Left colon (tissue), 2 donors: ENCODE measurements at regions of chr20 and their contacts with region 1.

Region 1: GRCh38 chr20:543369-544152 is at the start of gene CSNK2A1:
- DNase-seq: peak; percentile 93 to 95
- ATAC-seq: peak; percentile 97
- total RNA-seq, gene CSNK2A1: 106 to 117 TPM

Region 2: GRCh38 chr20:610130-611046 is 66.8 kb after region 1 on chr20 and contains the start of gene TCF15:
- intact Hi-C with region 1: no loop called
- DNase-seq: no peak
- ATAC-seq: no peak
- total RNA-seq, gene TCF15: 0.22 TPM in 1 of 2 donors, not detected in the other

Region 3: DNA sequence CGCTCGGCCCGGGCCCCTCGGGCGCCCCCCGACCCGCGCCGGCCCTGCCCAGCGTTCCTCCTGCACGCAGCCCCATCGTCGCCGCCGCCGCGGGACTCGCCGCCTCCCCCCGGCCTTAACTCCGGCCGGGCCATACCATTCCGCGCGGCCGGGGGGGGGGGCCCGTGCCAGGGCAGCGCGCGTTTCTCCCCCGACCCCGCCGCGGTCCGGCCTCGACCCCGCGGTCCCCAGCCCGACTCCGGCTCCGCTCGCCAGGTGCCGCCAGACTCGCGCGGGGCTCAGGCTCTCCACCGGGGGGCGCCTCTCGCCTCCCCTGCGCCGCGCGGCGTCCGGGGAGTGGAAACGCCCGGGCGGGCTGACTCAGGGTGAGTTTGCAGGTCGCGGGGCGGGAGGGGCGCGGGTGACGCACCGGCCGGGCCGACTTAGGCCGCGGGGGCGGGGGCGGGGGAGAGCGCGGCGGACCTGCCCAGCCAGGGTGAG is 109.6 kb after region 1 on chr20 and contains the start of gene SRXN1:
- intact Hi-C with region 1: loop called in 1 of 2 experiments (anchors 10 kb)
- DNase-seq: peak; percentile 90 to 92
- ATAC-seq: peak; percentile 95
- total RNA-seq, gene SRXN1: 21.1 to 21.9 TPM

Region 4: DNA sequence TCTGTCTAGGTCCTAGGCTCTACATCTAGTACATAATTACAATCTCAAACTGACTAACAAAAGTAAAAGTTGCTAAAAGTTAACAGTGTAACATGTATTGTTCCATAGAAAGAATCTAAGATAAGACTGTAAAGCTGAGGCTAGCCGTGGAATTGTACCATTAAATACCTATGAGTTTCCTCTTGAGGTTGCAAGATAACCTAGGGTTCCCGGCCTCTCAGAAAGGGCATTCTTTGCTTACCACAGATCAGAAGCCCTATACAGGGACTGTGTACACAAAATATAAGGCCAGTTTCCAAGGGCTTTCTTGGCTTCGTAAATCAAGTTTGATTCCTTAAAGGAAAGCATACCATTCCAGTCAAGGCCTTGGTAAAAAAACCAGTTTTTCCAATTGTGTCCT is 236.2 kb after region 1 on chr20:
- intact Hi-C with region 1: no loop called
- DNase-seq: no peak
- ATAC-seq: no peak